Activated B cell treated with CpG ODN at 0.5 μM for 24 hours (primary cell): ENCODE measurements at regions of chr15 and their contacts with region 1.

Region 1: DNA sequence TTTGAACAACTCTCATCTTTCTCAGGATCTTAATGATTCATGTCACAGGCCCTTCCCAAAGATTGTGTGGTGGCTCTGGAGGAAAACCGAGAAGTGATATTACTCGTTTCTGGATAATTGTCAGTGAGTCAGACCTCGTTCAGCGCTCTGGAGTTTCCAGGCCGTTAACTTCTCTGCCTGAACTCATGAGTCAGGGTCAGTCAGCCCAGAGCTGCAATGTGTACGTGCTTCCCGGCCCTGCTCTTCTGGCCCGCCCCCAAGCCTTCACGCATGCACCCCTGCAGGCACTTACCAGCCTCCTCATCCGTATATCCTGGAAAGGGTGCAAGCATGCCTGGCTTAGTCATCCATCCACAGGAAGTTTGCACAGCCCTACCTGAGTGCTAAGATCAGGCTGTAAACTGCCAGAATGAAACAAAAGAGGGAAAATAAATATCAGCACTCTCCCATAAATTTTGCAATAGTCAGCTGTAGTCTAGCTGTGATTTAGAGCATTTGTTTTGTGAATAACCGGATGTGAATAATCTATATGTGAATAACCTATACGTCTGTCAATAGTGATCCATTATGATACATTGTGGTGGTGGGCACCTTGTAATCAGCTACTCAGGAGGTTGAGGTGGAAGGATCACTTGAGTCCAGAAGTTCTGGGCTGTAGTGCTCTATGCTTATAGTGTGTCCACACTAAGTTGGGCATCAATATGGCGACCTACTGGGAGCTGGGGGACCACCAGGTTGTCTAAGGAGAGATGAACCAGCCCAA is 35.3 kb upstream of the SEMA4B start:
- DNase-seq: no peak
- ATAC-seq: peak; percentile 75
- H3K4me3 Mint-ChIP-seq: peak overlapping the region; percentile 44
- H3K27ac Mint-ChIP-seq: peak overlapping the region; percentile 56
- H3K4me1 Mint-ChIP-seq: peaks cover 49% of the 10 kb centered on the region
- H3K27me3 Mint-ChIP-seq: no peaks in the 10 kb centered on the region
- CTCF ChIP-seq: no peak

Region 2: DNA sequence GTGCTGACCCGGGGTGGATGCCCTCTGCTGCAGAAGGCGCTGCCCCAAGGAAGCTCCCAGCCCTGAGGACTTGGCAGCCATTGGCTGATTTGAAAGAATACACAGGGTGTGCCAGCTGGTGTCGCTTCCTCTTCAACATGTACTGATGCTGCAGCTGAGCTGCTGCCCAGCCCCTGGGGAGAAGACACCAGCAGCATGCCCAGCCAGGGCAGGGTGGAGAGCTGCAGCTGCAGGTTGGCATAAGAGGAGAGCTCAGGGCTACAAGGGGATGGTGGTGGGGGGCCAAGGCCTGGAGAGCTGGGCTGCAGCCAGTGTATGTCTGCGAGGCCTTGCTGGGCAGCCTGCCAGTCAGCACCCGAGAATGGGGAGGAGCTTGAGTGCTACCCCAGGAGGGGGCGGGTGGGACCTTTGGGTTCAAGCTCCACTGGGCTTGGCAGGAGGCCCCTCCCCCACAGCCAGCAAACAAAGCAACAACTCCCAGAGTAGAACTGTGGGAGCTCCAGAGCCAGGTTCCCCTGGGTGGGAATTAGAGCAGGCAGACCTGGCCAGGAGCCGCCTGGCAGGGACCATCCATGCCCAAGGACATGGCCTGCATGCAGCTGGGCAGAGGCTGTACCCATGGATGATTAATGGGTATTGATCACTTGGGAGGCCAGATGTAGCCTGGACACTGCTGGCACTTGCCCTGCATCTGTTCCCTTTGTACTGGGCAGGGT is 26.1 kb after region 1 on chr15:
- CTCF ChIA-PET with region 1: interaction called, 15 read pairs
- POLR2A ChIA-PET with region 1: interaction called, 58 read pairs
- intact Hi-C with region 1: loop called (anchors 2 kb)
- DNase-seq: peak; percentile 69
- ATAC-seq: peak; percentile 75
- H3K4me3 Mint-ChIP-seq: peak overlapping the region; percentile 77
- H3K27ac Mint-ChIP-seq: peak overlapping the region; percentile 98
- H3K4me1 Mint-ChIP-seq: peaks cover 97% of the 10 kb centered on the region
- H3K27me3 Mint-ChIP-seq: no peaks in the 10 kb centered on the region
- CTCF ChIP-seq: no peak

Region 3: DNA sequence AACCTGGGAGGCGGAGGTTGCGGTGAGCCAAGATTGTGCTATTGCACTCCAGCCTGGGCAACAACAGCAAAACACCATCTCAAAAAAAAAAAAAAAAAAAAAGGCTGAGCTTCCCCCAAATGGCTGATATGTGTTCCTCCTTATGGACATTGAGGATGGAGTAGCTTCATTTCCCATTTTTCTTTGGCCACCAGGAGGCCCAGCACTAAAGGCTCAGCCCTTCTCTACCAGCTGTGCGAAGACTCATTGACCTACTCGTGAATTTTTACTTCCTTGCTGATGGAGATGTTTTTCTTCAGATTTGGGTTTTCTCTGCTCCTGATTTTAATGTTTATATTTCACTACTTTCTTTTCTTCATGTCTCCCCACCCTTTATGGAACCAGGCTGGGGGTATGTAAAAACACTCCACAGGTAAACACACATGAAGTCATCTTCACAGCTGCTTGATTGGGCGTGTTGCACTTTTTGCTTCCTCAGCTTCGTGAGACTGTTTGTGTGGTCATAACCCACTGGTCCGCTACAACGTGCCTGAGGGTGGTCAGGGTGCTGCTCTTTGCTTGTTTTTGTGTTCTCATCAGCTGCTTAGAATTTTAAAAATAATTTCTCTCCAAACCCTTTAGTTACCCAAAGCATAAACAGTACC is 48.8 kb after region 1 on chr15:
- CTCF ChIA-PET with region 1: interaction called, 3 read pairs
- POLR2A ChIA-PET with region 1: interaction called, 23 read pairs
- intact Hi-C with region 1: loop called (anchors 1 kb)
- DNase-seq: no peak
- ATAC-seq: peak; percentile 29
- H3K4me3 Mint-ChIP-seq: peak overlapping the region; percentile 59
- H3K27ac Mint-ChIP-seq: peak overlapping the region; percentile 95
- H3K4me1 Mint-ChIP-seq: peaks cover 97% of the 10 kb centered on the region
- H3K27me3 Mint-ChIP-seq: no peaks in the 10 kb centered on the region
- CTCF ChIP-seq: no peak

Region 4: DNA sequence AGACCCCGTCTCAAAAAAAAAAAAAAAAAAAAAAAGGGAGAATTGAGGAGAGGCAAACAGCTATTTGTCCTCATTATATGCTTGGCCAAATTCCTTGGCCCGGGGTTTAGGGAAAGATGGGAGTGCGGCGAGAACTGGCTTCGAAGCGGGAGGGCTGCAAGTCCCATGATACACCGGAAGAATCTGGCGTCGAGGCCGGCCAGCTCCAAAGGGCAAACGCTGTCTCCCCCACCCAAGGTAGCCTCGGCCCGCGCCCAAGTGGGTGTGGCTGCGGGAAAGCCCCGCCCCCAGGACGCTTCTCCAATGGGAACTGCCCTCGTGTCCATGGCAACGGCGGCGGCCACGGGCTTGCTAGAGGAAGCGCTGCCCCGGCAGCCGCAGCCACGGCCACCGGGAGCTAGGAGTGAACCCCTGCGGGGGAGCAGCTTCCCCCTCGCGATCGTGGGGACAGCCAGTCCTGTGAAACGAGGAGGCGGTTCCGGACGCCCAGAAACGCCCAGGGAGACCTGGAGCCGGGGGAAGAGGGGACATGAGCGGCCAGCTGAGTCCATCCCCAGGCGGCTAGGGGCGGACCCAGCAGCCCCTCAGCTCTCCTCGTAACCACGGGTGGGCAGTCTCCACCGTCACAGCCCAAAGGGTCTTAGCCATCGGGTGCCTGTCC is 83.5 kb after region 1 on chr15 and contains the start of gene TTLL13:
- CTCF ChIA-PET with region 1: no interaction called
- POLR2A ChIA-PET with region 1: interaction called, 11 read pairs
- intact Hi-C with region 1: no loop called
- DNase-seq: peak; percentile 60
- ATAC-seq: peak; percentile 79
- H3K4me3 Mint-ChIP-seq: peak within 1 kb of the TSS; percentile 76
- H3K27ac Mint-ChIP-seq: peak within 1 kb of the TSS; percentile 4
- H3K4me1 Mint-ChIP-seq: peaks cover 14% of the 10 kb centered on the region
- H3K27me3 Mint-ChIP-seq: no peaks in the 10 kb centered on the region
- CTCF ChIP-seq: no peak
- total RNA-seq, gene TTLL13: 0.49 and 2.2 TPM in 2 replicates